A549 (cell line): ENCODE measurements at regions of chr12 and their contacts with region 1.

Region 1: DNA sequence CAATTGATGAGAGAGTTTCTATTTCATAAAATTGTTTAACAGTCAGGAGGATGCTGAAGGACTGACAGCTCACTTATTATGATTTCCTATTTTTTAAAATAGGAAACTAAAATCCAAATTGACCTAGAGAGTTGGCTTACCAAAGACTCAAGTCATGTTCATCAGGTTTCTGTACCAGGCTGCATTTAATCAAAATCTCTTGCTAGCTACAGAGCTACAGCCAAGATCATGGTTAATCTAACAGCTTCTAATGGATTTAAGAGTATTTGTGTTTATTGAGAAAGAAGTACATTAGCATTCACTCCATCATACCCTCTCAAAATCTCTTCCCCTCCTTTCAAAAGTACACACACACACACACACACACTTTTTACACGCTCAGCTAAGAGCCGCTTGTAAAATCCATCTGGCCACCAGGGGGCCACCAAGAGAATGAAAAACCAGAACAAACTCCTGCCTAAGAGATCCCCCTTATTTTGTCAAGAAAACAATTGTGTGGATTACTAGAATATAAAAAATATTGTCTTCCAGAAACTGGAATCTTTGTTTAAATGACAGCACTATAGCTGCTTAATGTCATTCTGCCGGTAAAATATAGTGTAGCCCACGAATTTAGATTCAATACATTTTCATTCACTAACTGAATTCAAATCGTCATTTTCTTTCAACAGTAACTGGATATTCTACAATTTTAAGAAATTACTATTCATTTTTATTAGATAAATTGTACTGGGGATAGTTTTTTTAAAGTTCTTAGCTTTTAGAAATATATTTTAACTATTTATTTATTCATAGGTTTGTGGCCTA is 334.0 kb downstream of the BTG1 start:
- DNase-seq: peak; percentile 33 to 69
- ATAC-seq: peak in 1 of 2 experiments; percentile 85; a peak in 3 of 6 replicates
- H3K4me3 ChIP-seq: no peak overlapping the region
- H3K27ac ChIP-seq: peak overlapping the region in 1 of 2 experiments; percentile 40; a peak in 2 of 6 replicates
- H3K4me1 ChIP-seq: no peaks in the 10 kb centered on the region
- CTCF ChIP-seq: peak; percentile 87
- EP300 ChIP-seq: no peak
- POLR2A ChIP-seq: no peak
- RAD21 ChIP-seq: peak; percentile 73 to 82

Region 2: GRCh38 chr12:91523831-91524230 is 287.9 kb before region 1 on chr12:
- CTCF ChIA-PET with region 1: no interaction called
- POLR2A ChIA-PET with region 1: no interaction called
- DNase-seq: no peak
- ATAC-seq: no peak
- H3K4me3 ChIP-seq: no peak overlapping the region
- H3K27ac ChIP-seq: no peak overlapping the region
- H3K4me1 ChIP-seq: no peaks in the 10 kb centered on the region
- CTCF ChIP-seq: no peak
- EP300 ChIP-seq: no peak
- POLR2A ChIP-seq: no peak
- RAD21 ChIP-seq: no peak

Region 3: GRCh38 chr12:91801048-91801447 is 10.6 kb before region 1 on chr12:
- CTCF ChIA-PET with region 1: interaction called, 11 read pairs
- POLR2A ChIA-PET with region 1: no interaction called
- DNase-seq: peak in 1 of 2 experiments; percentile 7
- ATAC-seq: no peak
- H3K4me3 ChIP-seq: no peak overlapping the region
- H3K27ac ChIP-seq: no peak overlapping the region
- H3K4me1 ChIP-seq: no peaks in the 10 kb centered on the region
- CTCF ChIP-seq: no peak
- EP300 ChIP-seq: no peak
- POLR2A ChIP-seq: no peak
- RAD21 ChIP-seq: no peak

Region 4: GRCh38 chr12:92041742-92042141 is 230.1 kb after region 1 on chr12:
- CTCF ChIA-PET with region 1: interaction called, 14 read pairs
- POLR2A ChIA-PET with region 1: no interaction called
- DNase-seq: no peak
- ATAC-seq: peak in 1 of 2 experiments; percentile 51; a peak in 2 of 6 replicates
- H3K4me3 ChIP-seq: no peak overlapping the region
- H3K27ac ChIP-seq: no peak overlapping the region
- H3K4me1 ChIP-seq: peaks cover 6% of the 10 kb centered on the region; the same call in 1 of the 3 replicates
- CTCF ChIP-seq: no peak
- EP300 ChIP-seq: no peak
- POLR2A ChIP-seq: no peak
- RAD21 ChIP-seq: no peak

Region 5: GRCh38 chr12:92070054-92070863 is 258.6 kb after region 1 on chr12:
- CTCF ChIA-PET with region 1: interaction called, 10 read pairs
- POLR2A ChIA-PET with region 1: no interaction called
- DNase-seq: peak; percentile 63 to 88
- ATAC-seq: peak; percentile 86 to 90
- H3K4me3 ChIP-seq: no peak overlapping the region; the same call in 2 of the 3 replicates
- H3K27ac ChIP-seq: peak overlapping the region; percentile 78 to 87
- H3K4me1 ChIP-seq: peaks cover 60% of the 10 kb centered on the region
- CTCF ChIP-seq: no peak; the same call in 2 of the 3 replicates
- EP300 ChIP-seq: no peak; a peak in 1 of 5 replicates
- POLR2A ChIP-seq: no peak
- RAD21 ChIP-seq: peak; percentile 47 to 64